T-cell (primary cell): ENCODE measurements at regions of chr1 and their contacts with region 1.

Region 1: DNA sequence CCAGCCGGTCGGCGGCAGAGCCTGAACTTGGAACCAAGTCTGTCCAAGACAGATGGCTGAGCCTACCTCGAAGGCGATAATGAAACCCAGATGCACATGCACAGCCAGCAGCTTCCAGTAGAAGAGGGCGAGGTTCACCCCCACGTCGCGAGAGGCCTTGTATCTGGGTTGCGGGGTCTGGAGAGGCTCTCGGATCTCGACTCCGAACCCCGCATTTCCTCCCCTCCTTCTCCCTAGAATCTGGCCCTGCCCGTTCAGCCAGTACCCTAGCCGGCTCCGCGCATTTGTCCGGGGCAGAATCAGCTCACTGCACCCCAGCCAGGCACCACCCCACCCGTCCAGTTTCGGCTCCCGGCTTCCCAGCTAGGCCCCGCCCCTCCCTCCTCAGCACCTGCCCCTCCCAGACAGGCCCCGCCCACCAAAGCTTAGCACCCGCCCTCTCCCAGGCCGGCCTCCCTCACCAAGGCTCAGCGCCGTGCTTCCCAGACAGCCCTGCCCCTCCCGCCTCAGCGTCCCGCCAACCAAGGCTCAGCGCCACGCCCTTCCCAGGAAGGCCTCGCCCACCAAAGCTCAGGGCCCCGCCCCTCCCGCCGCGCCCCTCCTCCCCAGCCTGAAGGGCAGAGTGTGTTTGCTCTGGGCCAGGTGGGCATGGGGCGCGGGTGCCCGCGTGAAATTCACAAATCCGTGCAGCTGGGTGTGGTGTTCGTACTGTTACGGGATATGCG is 4.8 kb upstream of the ARHGEF19 start:
- DNase-seq: peak; percentile 75 to 96 (median 85)
- ATAC-seq: peak; percentile 97
- H3K4me3 ChIP-seq: peak overlapping the region; percentile 58 to 70
- H3K4me3 Mint-ChIP-seq: peak overlapping the region; percentile 81 to 83 (median 82)
- H3K27ac ChIP-seq: no peak overlapping the region
- H3K27ac Mint-ChIP-seq: peak overlapping the region; percentile 63 to 82
- H3K4me1 ChIP-seq: peaks cover 4 to 26% of the 10 kb centered on the region in 2 experiments
- H3K4me1 Mint-ChIP-seq: peaks cover 18 to 25% (median 23%) of the 10 kb centered on the region in 3 donors
- H3K27me3 ChIP-seq: peaks cover 0 to 14% of the 10 kb centered on the region in 2 experiments
- H3K27me3 Mint-ChIP-seq: no peaks in the 10 kb centered on the region

Region 2: DNA sequence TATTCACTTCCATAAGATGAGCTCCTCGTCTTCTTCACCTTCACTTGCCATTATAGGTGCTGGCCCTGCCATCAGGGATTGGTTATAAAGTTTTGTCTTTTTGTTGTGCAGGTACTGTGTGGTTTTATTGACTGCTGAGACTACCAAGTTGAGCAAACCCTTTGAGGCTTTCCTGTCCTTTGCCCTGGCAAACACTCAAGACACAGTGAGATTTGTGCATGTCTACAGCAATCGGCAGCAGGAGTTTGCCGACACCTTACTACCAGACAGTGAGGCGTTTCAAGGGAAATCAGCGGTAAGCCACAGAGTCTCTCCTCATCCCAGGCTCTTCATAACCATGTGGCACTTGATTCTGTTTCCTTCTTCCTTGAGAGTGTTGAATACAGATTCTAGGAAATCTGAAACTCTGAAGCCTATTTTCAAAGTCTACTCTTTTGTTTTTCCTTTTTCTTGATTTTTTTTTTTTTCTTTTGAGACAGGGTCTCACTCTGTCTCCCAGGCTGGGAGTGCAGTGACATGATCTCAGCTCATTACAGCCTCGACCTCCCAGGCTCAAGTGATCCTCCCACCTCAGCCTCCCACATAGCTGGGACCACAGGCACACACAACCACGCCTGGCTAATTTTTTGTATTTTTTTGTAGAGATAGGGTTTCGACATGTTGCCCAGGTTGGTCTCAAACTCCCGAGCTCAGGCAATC is 655.0 kb before region 1 on chr1:
- CTCF ChIA-PET with region 1: interaction called in 1 of 2 experiments, 11 read pairs
- POLR2A ChIA-PET with region 1: no interaction called
- DNase-seq: no peak
- ATAC-seq: no peak
- H3K4me3 ChIP-seq: no peak overlapping the region
- H3K4me3 Mint-ChIP-seq: no peak overlapping the region
- H3K27ac ChIP-seq: no peak overlapping the region
- H3K27ac Mint-ChIP-seq: no peak overlapping the region
- H3K4me1 ChIP-seq: no peaks in the 10 kb centered on the region
- H3K4me1 Mint-ChIP-seq: peaks cover 0 to 3% (median 0%) of the 10 kb centered on the region in 3 donors
- H3K27me3 ChIP-seq: no peaks in the 10 kb centered on the region
- H3K27me3 Mint-ChIP-seq: no peaks in the 10 kb centered on the region

Region 3: DNA sequence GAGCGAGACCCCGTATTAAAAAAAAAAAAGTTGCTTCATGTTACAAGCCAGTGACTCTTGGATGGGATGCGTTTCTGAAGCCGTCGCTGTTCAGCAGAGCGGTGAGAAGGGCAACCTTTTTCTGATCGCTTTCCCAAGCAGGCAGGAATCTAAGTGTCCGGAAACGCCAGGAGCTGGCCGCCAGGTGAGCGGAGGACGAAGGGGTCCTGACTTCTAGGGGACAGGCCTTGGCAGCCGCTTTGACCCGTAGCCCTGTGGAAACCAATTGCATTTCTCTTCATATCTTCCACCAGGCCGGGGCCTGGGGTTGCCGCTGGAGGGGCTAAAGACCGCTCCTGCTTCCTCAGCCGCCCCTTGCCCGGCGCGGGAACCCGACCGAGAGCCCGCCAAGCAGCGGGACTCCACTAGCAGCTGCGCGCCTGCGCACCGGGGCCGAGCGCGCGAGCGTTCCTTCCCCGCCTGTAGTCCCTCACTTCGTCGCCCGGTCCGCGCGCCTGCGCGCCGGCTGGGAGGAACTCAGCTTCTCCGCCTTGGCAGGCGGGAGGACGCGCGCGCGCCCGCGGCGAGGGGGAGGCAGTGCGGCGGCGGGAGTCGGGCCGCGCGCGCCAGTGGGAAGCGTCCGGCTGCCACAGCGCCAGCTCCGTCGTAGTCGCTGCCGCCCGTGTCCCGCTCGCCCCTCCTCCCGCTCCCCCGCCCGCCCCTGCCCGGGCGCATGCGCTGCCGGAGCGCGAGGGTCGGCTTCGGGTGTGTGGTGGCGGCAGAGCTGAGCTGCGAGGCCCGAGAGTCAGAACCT is 369.9 kb before region 1 on chr1 and contains the start of gene SPEN:
- CTCF ChIA-PET with region 1: no interaction called
- POLR2A ChIA-PET with region 1: interaction called in 1 of 2 experiments, 12 read pairs
- DNase-seq: peak; percentile 93 to 100 (median 98)
- ATAC-seq: peak; percentile 82 to 86 (median 83)
- H3K4me3 ChIP-seq: peak within 1 kb of the TSS; percentile 93 to 95
- H3K4me3 Mint-ChIP-seq: peak within 1 kb of the TSS; percentile 97 to 98 (median 97)
- H3K27ac ChIP-seq: peak within 1 kb of the TSS; percentile 95
- H3K27ac Mint-ChIP-seq: peak within 1 kb of the TSS; percentile 96 to 97
- H3K4me1 ChIP-seq: peaks cover 25 to 33% of the 10 kb centered on the region in 2 experiments
- H3K4me1 Mint-ChIP-seq: peaks cover 49 to 58% (median 53%) of the 10 kb centered on the region in 3 donors
- H3K27me3 ChIP-seq: no peaks in the 10 kb centered on the region
- H3K27me3 Mint-ChIP-seq: no peaks in the 10 kb centered on the region
- total RNA-seq, gene SPEN: 69.9 to 81.1 (median 72.1) TPM

Region 4: DNA sequence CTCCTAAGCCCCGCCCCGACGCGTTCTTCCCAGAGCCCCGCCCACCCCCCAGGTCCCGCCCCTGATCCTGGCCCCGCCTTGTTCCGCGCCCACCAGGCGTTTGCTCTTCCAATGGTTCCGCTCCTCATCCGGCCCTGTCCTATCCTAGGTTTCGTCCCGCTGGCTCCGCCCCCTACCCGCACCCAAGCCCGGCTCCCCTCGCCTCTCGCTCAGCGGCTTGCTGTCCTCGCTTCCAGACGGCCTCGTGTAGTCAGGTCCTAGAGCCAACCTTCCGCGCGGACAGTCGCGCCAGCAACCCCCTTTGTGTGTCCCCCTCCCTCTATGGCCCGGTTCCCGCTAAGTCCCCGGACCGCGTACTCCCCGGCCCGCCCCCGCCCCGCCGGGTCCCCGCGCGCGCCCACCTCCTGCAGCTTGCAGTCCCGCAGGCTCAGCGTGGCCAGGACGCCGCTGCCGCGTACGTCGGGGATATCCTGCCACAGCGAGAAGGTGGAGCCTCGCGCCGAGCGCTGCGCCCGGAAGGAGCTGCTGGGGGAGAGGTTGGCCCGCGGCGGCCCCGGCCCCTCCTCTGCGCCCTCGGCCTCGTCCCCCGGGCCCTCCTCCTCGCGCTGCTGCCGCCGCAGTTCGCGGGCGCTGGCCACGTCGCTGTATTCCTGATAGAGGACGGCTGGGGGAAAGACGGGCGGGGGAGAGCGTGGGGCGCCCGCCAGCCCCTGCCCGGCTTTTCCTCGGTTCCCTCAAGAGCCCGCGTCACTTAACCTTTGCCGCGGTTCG is 10.5 kb before region 1 on chr1:
- CTCF ChIA-PET with region 1: interaction called in 1 of 2 experiments, 5 read pairs
- POLR2A ChIA-PET with region 1: interaction called, 9 to 10 read pairs
- DNase-seq: peak; percentile 84 to 96 (median 92)
- ATAC-seq: peak; percentile 90 to 92 (median 92)
- H3K4me3 ChIP-seq: peak overlapping the region; percentile 66 to 67
- H3K4me3 Mint-ChIP-seq: peak overlapping the region; percentile 84 to 87 (median 86)
- H3K27ac ChIP-seq: peak overlapping the region; percentile 85
- H3K27ac Mint-ChIP-seq: peak overlapping the region; percentile 94 to 97
- H3K4me1 ChIP-seq: peaks cover 0 to 25% of the 10 kb centered on the region in 2 experiments
- H3K4me1 Mint-ChIP-seq: peaks cover 6 to 10% (median 6%) of the 10 kb centered on the region in 3 donors
- H3K27me3 ChIP-seq: no peaks in the 10 kb centered on the region
- H3K27me3 Mint-ChIP-seq: no peaks in the 10 kb centered on the region